ENCODE measurements at regions of chr1 and their contacts with region 1.

Region 1: DNA sequence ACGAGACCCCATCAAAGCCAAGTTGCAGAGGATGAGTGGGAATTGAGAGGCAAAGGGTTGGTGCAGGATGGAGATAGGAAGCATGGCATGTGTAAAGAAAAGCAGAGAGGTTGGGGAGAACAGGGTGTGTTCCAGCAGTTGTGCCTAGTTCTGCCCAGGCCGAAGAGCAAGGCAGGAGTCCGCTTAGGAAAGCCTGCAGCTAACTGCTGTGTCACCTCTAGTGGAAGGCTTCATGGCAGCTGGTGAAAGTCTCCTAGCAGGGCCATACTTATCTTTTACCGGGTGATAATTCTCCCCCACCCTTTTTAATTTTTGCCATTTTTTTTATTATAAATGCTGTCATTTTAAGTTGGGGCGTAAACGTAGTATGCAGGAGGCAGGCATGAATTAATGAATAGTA is 93.6 kb downstream of the NFIA start:
- DNase-seq: no peak
- ATAC-seq: peak; percentile 23 to 25

Region 2: DNA sequence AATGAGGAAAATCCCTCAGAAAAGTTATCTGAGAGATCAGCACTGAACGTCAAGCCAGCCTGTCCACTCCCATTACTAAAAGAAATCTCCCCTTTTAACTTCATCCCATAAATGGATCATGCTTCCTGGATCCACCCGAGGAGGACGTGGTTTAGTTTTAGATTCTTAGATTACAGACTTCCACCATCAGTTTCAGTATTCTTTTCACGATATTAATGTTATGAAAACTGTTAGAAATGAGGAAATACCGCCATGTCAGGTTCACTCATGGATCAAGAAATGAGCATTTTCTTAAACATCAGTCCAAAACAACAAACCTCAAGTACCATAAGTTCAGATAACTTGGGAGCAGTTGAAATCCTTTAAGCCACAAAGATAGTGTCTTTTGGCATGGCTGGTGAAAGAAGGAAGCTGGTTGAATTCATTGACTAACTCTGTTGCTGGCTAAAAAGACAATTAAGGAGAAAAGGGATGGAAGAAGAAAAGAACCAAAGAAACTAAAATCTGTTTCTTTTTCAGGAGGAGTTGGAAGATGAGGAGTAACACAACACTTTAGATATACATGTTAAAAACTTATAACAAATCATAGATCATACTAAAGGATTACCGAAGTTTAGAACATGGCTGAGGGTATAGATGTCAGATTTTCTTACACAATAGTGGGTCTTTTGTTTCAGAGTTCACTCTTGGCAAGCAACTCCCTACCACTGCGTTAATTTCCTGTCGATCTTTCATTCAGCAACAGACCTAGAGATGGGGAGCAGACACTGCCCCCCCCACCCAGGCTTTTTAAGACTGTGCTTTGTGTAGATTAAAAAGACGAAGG is 43.6 kb before region 1 on chr1:
- intact Hi-C with region 1: loop called in 1 of 2 experiments (anchors 5 kb)
- DNase-seq: no peak
- ATAC-seq: peak in 1 of 2 donors; percentile 44

Region 3: GRCh38 chr1:61210435-61211154 is 34.6 kb after region 1 on chr1:
- intact Hi-C with region 1: no loop called
- DNase-seq: no peak
- ATAC-seq: no peak

Measured in left cardiac atrium (tissue), 4 donors.